Activated CD4-positive, alpha-beta T cell treated with anti-CD3 and anti-CD28 coated beads for 36 hours (primary cell): ENCODE measurements at regions of chr17 and their contacts with region 1.

Region 1: GRCh38 chr17:32503251-32504165 is 16.7 kb downstream of the CDK5R1 start:
- DNase-seq: peak; percentile 71
- ATAC-seq: peak; percentile 93
- H3K4me3 Mint-ChIP-seq: peak overlapping the region; percentile 46
- H3K27ac Mint-ChIP-seq: peak overlapping the region; percentile 97
- H3K4me1 Mint-ChIP-seq: peaks cover 73% of the 10 kb centered on the region
- H3K27me3 Mint-ChIP-seq: no peaks in the 10 kb centered on the region

Region 2: GRCh38 chr17:32558997-32559650 is 55.6 kb after region 1 on chr17:
- CTCF ChIA-PET with region 1: no interaction called
- POLR2A ChIA-PET with region 1: no interaction called
- intact Hi-C with region 1: loop called in 1 of 2 experiments (anchors 5 kb)
- DNase-seq: no peak
- ATAC-seq: peak; percentile 48
- H3K4me3 Mint-ChIP-seq: no peak overlapping the region
- H3K27ac Mint-ChIP-seq: no peak overlapping the region
- H3K4me1 Mint-ChIP-seq: peaks cover 28% of the 10 kb centered on the region
- H3K27me3 Mint-ChIP-seq: no peaks in the 10 kb centered on the region